MCF 10A (cell line): ENCODE measurements at regions of chr3 and their contacts with region 1.

Region 1: DNA sequence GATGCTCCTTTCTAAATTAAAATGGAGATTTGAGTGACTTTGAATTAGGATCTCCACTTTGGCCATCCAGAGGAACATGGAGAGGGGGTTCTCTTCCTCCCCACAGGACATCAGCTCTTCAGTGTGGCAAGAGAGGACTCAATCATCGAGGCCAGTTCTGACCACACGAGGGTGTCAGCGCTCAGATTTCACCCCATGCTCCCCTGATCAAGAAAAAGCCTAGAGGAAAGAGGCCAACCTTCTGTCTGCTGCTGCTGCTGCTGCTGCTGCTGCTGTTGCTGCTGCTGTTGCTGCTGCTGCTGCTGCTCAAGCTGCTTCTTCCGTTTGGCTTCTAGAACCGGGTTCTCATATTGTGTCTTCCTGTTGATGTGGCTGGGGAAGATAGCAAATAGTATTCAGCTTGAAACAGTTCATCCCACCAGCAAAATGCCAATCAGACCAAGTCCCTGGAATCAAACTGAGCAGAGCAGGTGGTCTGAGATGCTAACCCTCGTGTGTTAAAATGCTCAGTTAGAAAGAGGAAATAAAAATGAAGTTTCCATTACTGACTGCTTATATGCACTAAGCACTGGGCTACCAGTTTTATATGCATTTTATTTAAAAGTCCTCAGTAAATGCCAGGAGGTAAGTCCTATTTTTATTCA is 599.0 kb downstream of the MAGI1 start:
- DNase-seq: peak; percentile 66
- H3K4me3 Mint-ChIP-seq: no peak overlapping the region
- H3K27ac Mint-ChIP-seq: no peak overlapping the region
- H3K4me1 Mint-ChIP-seq: no peaks in the 10 kb centered on the region
- H3K27me3 Mint-ChIP-seq: no peaks in the 10 kb centered on the region
- CTCF ChIP-seq: peak; percentile 45

Region 2: GRCh38 chr3:65318231-65318630 is 121.5 kb before region 1 on chr3:
- CTCF ChIA-PET with region 1: no interaction called
- POLR2A ChIA-PET with region 1: no interaction called
- intact Hi-C with region 1: no loop called
- DNase-seq: no peak
- H3K4me3 Mint-ChIP-seq: no peak overlapping the region
- H3K27ac Mint-ChIP-seq: no peak overlapping the region
- H3K4me1 Mint-ChIP-seq: no peaks in the 10 kb centered on the region
- H3K27me3 Mint-ChIP-seq: no peaks in the 10 kb centered on the region
- CTCF ChIP-seq: no peak

Region 3: DNA sequence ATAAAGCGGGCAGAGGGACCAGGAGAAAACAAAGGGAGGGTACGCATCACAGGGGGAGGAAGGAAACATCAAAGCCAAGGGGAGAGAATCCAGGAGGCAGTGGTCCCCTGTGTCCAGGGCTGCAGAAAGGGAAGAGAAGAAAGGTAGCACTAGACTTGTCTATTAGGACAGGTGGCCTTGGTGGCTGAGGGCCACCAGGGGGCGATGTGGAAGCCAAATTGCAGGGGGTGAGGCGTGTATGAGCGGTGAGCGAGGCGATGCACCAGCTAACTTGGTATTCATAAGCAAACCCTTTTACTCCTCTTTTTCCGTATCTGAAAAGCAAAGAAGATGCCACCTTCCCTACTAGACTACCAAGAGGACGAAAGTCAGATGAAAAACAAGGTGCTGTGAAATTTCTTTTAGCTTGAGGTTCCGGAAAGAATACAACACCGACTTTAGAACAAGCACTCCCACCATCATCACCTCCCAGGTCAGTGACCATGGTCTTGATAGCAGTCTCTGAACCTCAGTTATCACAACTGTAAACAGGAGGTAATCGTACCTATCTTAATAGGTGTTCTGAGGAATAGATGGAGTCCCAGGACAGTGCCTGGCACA is 97.6 kb before region 1 on chr3:
- CTCF ChIA-PET with region 1: interaction called, 4 read pairs
- POLR2A ChIA-PET with region 1: no interaction called
- intact Hi-C with region 1: loop called (anchors 1 kb)
- DNase-seq: peak; percentile 73
- H3K4me3 Mint-ChIP-seq: no peak overlapping the region
- H3K27ac Mint-ChIP-seq: no peak overlapping the region
- H3K4me1 Mint-ChIP-seq: no peaks in the 10 kb centered on the region
- H3K27me3 Mint-ChIP-seq: peaks cover 13% of the 10 kb centered on the region
- CTCF ChIP-seq: peak; percentile 68

Region 4: DNA sequence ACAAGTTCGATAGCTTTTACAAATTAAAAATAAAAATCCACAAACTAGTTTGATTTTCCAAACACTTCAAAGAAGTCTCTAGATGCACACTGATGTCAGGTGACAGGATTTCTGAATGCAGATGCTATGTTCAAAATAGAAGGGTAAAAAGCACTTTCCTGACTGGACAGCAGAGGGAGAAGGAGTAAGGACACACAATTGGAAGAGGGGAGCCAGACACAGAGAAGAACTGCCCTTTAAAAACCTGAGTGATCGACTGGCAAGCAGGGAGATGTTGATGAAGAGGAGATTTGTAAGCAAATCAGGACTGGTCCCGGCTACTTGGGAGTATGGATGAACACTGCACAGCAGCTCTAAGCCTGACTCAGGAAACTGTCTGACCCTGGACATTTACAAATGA is 13.9 kb before region 1 on chr3:
- CTCF ChIA-PET with region 1: interaction called, 28 read pairs
- POLR2A ChIA-PET with region 1: interaction called, 3 read pairs
- intact Hi-C with region 1: no loop called
- DNase-seq: peak; percentile 31
- H3K4me3 Mint-ChIP-seq: no peak overlapping the region
- H3K27ac Mint-ChIP-seq: no peak overlapping the region
- H3K4me1 Mint-ChIP-seq: no peaks in the 10 kb centered on the region
- H3K27me3 Mint-ChIP-seq: no peaks in the 10 kb centered on the region
- CTCF ChIP-seq: peak; percentile 27

Region 5: DNA sequence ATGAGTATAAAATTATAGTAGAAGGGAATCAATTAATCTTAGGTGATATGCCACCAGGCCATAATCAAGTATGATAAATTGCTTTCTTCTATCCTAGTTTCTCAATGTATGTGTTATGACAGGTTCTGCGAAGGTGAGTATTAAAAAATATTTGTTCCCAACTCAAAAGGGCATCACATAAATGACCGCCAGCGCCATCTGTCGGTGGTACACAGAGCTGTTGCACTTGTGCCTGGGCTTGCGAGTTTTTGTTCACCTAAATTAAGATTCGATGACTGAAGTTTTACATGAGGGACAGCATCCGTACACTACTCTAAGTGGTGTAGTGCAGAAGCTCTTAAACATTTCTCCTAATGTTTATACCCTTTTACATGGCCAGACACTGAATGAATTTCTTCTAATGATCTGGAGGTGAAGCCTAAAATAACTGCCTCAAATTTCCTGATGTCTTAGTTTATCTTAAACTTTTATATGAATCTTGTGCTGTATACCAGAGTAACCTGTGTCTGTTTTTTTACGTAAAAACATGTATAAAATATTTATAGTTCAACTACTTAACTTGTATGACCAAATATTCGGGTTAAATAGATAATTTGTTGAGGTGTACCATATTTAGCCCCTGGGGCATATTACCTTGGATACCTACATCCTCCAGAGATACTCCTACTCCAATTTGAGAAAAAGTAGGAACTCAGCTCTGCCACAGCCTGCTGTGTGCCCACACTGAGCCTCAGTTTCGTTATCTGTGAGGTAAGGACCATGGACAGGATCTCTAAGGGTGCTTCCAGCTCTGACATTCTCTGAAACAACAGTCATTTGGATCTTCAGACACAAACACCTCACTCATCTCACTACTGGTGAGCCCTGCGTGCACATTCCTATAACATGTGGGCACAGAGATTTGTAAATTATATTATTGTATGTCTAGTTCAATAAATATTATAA is 233.4 kb after region 1 on chr3:
- CTCF ChIA-PET with region 1: interaction called, 102 read pairs
- POLR2A ChIA-PET with region 1: no interaction called
- intact Hi-C with region 1: loop called (anchors 1 kb)
- DNase-seq: peak; percentile 78
- H3K4me3 Mint-ChIP-seq: no peak overlapping the region
- H3K27ac Mint-ChIP-seq: no peak overlapping the region
- H3K4me1 Mint-ChIP-seq: peaks cover 9% of the 10 kb centered on the region
- H3K27me3 Mint-ChIP-seq: no peaks in the 10 kb centered on the region
- CTCF ChIP-seq: peak; percentile 64

Region 6: GRCh38 chr3:65751123-65751700 is 311.4 kb after region 1 on chr3:
- CTCF ChIA-PET with region 1: interaction called, 26 read pairs
- POLR2A ChIA-PET with region 1: no interaction called
- intact Hi-C with region 1: no loop called
- DNase-seq: peak; percentile 58
- H3K4me3 Mint-ChIP-seq: no peak overlapping the region
- H3K27ac Mint-ChIP-seq: no peak overlapping the region
- H3K4me1 Mint-ChIP-seq: no peaks in the 10 kb centered on the region
- H3K27me3 Mint-ChIP-seq: no peaks in the 10 kb centered on the region
- CTCF ChIP-seq: peak; percentile 63

Region 7: GRCh38 chr3:66195347-66195783 is 755.6 kb after region 1 on chr3:
- CTCF ChIA-PET with region 1: interaction called, 6 read pairs
- POLR2A ChIA-PET with region 1: no interaction called
- intact Hi-C with region 1: loop called (anchors 5 kb)
- DNase-seq: no peak
- H3K4me3 Mint-ChIP-seq: no peak overlapping the region
- H3K27ac Mint-ChIP-seq: no peak overlapping the region
- H3K4me1 Mint-ChIP-seq: no peaks in the 10 kb centered on the region
- H3K27me3 Mint-ChIP-seq: no peaks in the 10 kb centered on the region
- CTCF ChIP-seq: no peak